ENCODE measurements at regions of chr7 and their contacts with region 1.

Region 1: DNA sequence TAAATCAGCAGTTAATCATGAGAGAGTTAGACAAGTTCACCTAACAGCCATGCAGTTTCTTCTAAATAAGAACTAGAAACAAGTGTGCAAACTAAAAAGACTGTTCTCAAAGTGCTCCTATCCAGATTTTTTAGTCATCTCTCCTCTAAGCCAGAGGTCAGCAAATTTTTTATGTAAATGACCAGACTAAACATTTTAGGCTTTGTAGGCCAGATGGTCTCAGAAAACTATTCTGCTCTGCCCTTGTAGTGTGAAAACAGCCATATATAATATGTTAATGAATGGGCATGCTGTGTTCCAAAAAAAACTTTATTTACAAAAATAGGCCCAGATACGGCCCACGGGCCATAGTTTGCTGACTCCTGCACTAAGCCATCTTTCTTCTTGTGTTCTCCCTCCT is 263.0 kb upstream of the LRRN3 start:
- DNase-seq: no peak
- ATAC-seq: no peak
- H3K4me3 ChIP-seq: no peak overlapping the region
- H3K4me3 Mint-ChIP-seq: no peak overlapping the region
- H3K27ac ChIP-seq: no peak overlapping the region
- H3K27ac Mint-ChIP-seq: no peak overlapping the region
- H3K4me1 ChIP-seq: no peaks in the 10 kb centered on the region
- H3K4me1 Mint-ChIP-seq: peaks cover 2% of the 10 kb centered on the region
- H3K27me3 ChIP-seq: no peaks in the 10 kb centered on the region
- H3K27me3 Mint-ChIP-seq: no peaks in the 10 kb centered on the region
- CTCF ChIP-seq: no peak

Region 2: DNA sequence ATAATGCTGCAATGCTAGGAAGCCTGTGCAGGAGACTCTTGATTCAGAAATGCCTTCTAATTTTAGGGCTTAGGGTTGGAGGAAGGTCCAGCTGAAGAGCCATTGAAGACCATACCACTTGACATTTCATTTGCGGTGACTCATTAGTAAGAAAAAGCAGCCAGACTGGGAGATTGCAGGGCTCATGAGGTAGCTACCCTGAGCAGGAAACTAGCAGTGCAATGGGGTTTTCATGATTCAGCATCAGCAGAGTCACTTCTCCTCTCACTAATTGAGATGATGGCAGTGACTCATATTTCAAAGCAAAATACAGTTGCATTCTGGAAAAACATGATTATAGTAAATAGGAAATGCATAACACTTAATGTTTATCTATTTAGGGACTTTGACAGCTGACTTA is 1824.2 kb before region 1 on chr7:
- CTCF ChIA-PET with region 1: no interaction called
- POLR2A ChIA-PET with region 1: no interaction called
- intact Hi-C with region 1: no loop called
- DNase-seq: no peak
- ATAC-seq: no peak
- H3K4me3 ChIP-seq: no peak overlapping the region
- H3K4me3 Mint-ChIP-seq: no peak overlapping the region
- H3K27ac ChIP-seq: no peak overlapping the region
- H3K27ac Mint-ChIP-seq: no peak overlapping the region
- H3K4me1 ChIP-seq: no peaks in the 10 kb centered on the region
- H3K4me1 Mint-ChIP-seq: no peaks in the 10 kb centered on the region
- H3K27me3 ChIP-seq: no peaks in the 10 kb centered on the region
- H3K27me3 Mint-ChIP-seq: no peaks in the 10 kb centered on the region
- CTCF ChIP-seq: no peak

Region 3: DNA sequence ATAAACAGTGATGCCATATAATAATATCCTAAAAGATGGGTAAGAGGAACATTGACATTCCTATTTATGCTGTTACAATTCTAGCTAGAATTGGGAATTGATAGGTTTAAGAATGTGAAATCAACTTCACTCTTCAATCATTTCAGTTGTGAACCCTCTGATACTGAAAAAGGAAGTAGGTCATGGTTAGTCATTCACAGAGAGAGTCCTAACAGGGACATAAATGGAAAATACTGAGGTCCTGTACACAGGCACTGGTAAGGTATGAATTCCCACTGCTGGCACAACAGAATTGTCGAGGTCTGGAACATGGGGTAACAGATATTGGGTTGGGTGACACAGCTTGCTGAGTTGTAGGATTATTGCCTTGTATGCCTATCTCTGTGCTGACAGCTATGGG is 26.4 kb before region 1 on chr7:
- CTCF ChIA-PET with region 1: no interaction called
- POLR2A ChIA-PET with region 1: no interaction called
- intact Hi-C with region 1: loop called in 1 of 2 experiments (anchors 2 kb)
- DNase-seq: no peak
- ATAC-seq: no peak
- H3K4me3 ChIP-seq: no peak overlapping the region
- H3K4me3 Mint-ChIP-seq: no peak overlapping the region
- H3K27ac ChIP-seq: no peak overlapping the region
- H3K27ac Mint-ChIP-seq: no peak overlapping the region
- H3K4me1 ChIP-seq: no peaks in the 10 kb centered on the region
- H3K4me1 Mint-ChIP-seq: no peaks in the 10 kb centered on the region
- H3K27me3 ChIP-seq: no peaks in the 10 kb centered on the region
- H3K27me3 Mint-ChIP-seq: no peaks in the 10 kb centered on the region
- CTCF ChIP-seq: no peak